OCI-LY7 (cell line): ENCODE measurements at regions of chr2 and their contacts with region 1.

Region 1: DNA sequence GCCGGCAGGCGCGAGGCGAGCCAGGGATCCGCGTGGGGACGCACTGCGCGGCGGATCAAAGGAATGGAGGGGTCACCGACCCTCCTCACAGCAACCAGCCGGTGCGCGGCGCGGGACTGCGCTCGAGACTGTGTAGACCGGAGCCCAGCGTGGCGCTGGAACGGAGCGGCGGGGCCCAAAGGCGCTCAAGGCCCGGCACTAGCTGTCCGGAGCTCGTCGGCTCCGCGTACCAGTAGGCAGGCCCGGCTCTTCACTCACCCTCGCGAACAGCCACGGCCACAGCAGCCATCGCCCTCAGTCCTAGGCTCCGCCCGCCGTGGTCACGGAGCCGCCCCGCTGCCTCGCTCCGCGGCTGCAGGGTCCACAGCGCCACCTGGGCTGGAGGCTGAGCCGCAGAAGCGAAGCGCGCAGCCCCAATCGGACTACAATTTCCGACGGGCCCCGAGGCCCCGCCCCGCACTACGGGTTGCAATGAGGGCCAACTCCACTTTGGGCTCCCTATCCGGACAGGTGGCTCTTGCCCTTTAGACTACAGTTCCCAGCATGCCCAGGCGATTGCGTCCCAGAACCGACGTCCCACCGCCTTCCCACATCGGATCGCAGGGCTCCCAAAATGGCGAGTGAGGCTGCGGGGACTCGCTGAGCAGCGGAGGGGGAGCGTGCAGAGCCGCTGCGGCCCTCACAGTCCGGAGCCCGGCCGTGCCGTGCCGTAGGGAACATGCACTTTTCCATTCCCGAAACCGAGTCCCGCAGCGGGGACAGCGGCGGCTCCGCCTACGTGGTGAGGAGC is at the starts of genes EIF2B4 and SNX17:
- DNase-seq: peak; percentile 99
- H3K4me3 ChIP-seq: peak within 1 kb of the TSS; percentile 90
- H3K27ac ChIP-seq: peak within 1 kb of the TSS; percentile 68
- H3K4me1 ChIP-seq: peaks cover 27% of the 10 kb centered on the region
- CTCF ChIP-seq: peak; percentile 81
- total RNA-seq, gene EIF2B4: 23.9 and 27.0 TPM in 2 replicates
- total RNA-seq, gene SNX17: 63.1 and 66.0 TPM in 2 replicates

Region 2: GRCh38 chr2:26911911-26912861 is 458.0 kb before region 1 on chr2:
- CTCF ChIA-PET with region 1: no interaction called
- POLR2A ChIA-PET with region 1: no interaction called
- intact Hi-C with region 1: no loop called
- DNase-seq: no peak
- H3K4me3 ChIP-seq: no peak overlapping the region
- H3K27ac ChIP-seq: no peak overlapping the region
- H3K4me1 ChIP-seq: no peaks in the 10 kb centered on the region
- CTCF ChIP-seq: no peak

Region 3: GRCh38 chr2:27271631-27272340 is 98.4 kb before region 1 on chr2:
- CTCF ChIA-PET with region 1: no interaction called
- POLR2A ChIA-PET with region 1: no interaction called
- intact Hi-C with region 1: no loop called
- DNase-seq: no peak
- H3K4me3 ChIP-seq: no peak overlapping the region
- H3K27ac ChIP-seq: no peak overlapping the region
- H3K4me1 ChIP-seq: peaks cover 39% of the 10 kb centered on the region
- CTCF ChIP-seq: no peak

Region 4: GRCh38 chr2:27322766-27323595 is 47.2 kb before region 1 on chr2 and contains the start of gene MPV17:
- CTCF ChIA-PET with region 1: interaction called, 4 read pairs
- POLR2A ChIA-PET with region 1: interaction called, 3 read pairs
- intact Hi-C with region 1: loop called (anchors 2 kb)
- DNase-seq: peak; percentile 91
- H3K4me3 ChIP-seq: peak within 1 kb of the TSS; percentile 84
- H3K27ac ChIP-seq: peak within 1 kb of the TSS; percentile 58
- H3K4me1 ChIP-seq: peaks cover 16% of the 10 kb centered on the region
- CTCF ChIP-seq: no peak
- total RNA-seq, gene MPV17: 54.1 and 63.9 TPM in 2 replicates

Region 5: DNA sequence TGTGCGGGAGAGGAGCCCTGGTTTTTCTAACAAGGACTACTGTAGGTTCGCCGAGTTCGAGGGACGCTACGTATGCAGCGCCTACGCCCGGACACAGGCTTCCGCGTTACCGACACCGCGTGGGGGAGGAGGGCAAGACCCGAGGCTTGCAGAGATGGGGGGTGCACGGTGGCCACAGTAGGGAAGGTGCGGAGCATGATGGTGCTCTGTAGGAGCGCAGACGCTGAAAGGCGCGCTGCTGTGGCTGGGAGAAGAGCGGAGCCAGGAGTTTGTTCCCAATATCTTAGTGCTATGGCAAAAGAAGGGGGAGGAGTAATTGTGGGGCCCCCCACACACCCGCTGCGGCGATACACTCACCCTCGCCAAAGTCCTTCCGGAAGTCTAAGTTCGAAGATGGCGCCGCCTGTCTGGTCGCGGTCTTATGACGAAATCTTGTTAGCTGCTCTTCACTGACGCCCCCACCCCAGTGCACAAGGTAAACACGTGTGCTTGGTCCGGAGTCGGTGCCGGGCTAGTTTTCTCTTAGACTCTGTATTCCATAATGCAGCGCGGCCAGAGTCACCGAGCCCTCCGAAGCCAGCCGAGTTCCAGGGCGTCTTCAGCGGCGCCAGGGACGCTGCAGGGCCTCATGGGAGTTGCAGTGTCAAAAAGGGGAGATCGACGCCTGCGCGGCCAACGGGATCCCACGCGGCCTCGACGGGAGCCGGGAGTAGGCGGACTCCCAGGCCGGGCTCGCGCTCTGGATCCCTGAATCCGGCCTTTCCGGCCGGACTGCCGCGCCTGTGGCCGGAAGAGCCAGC is 13.6 kb before region 1 on chr2 and contains the start of gene GTF3C2:
- CTCF ChIA-PET with region 1: no interaction called
- POLR2A ChIA-PET with region 1: interaction called, 10 read pairs
- intact Hi-C with region 1: loop called (anchors 1 kb)
- DNase-seq: peak; percentile 99
- H3K4me3 ChIP-seq: peak within 1 kb of the TSS; percentile 77
- H3K27ac ChIP-seq: peak within 1 kb of the TSS; percentile 88
- H3K4me1 ChIP-seq: peaks cover 29% of the 10 kb centered on the region
- CTCF ChIP-seq: no peak
- total RNA-seq, gene GTF3C2: 54.2 and 56.9 TPM in 2 replicates

Region 6: GRCh38 chr2:27380626-27381545 is 10.7 kb after region 1 on chr2 and contains the start of gene ZNF513:
- CTCF ChIA-PET with region 1: interaction called, 4 read pairs
- POLR2A ChIA-PET with region 1: interaction called, 18 read pairs
- intact Hi-C with region 1: no loop called
- DNase-seq: peak; percentile 93
- H3K4me3 ChIP-seq: peak within 1 kb of the TSS; percentile 86
- H3K27ac ChIP-seq: peak within 1 kb of the TSS; percentile 72
- H3K4me1 ChIP-seq: peaks cover 19% of the 10 kb centered on the region
- CTCF ChIP-seq: no peak
- total RNA-seq, gene ZNF513: 9.0 and 10.0 TPM in 2 replicates

Region 7: DNA sequence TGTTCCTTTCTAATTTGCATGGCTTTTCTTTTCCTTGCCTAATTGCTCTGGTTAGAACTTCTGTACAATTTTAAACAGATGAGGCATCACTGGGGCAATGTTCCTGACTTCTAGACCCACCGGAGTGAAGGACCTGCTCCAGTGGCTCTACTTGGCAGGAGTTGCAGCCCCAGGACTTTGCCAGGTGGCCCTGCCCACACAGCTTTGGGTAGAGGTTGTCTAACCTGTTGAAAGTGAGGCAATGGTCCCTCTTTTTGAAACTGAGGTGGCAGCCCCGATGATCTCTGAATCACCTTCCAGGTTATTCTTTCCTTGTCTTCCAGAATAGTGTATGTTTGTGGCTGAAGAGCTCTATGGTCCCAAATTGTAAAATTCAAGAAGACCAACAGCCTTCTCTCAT is 182.7 kb after region 1 on chr2:
- CTCF ChIA-PET with region 1: no interaction called
- POLR2A ChIA-PET with region 1: no interaction called
- intact Hi-C with region 1: no loop called
- DNase-seq: no peak
- H3K4me3 ChIP-seq: no peak overlapping the region
- H3K27ac ChIP-seq: no peak overlapping the region
- H3K4me1 ChIP-seq: no peaks in the 10 kb centered on the region
- CTCF ChIP-seq: no peak

Region 8: GRCh38 chr2:27628767-27629709 is 258.8 kb after region 1 on chr2 and contains the starts of genes CCDC121 and GPN1:
- CTCF ChIA-PET with region 1: no interaction called
- POLR2A ChIA-PET with region 1: no interaction called
- intact Hi-C with region 1: loop called (anchors 1 kb)
- DNase-seq: peak; percentile 92
- H3K4me3 ChIP-seq: peak within 1 kb of the TSS; percentile 96
- H3K27ac ChIP-seq: peak within 1 kb of the TSS; percentile 81
- H3K4me1 ChIP-seq: peaks cover 32% of the 10 kb centered on the region
- CTCF ChIP-seq: no peak
- total RNA-seq, gene CCDC121: 5.1 and 9.2 TPM in 2 replicates
- total RNA-seq, gene GPN1: 29.5 and 31.1 TPM in 2 replicates

Region 9: DNA sequence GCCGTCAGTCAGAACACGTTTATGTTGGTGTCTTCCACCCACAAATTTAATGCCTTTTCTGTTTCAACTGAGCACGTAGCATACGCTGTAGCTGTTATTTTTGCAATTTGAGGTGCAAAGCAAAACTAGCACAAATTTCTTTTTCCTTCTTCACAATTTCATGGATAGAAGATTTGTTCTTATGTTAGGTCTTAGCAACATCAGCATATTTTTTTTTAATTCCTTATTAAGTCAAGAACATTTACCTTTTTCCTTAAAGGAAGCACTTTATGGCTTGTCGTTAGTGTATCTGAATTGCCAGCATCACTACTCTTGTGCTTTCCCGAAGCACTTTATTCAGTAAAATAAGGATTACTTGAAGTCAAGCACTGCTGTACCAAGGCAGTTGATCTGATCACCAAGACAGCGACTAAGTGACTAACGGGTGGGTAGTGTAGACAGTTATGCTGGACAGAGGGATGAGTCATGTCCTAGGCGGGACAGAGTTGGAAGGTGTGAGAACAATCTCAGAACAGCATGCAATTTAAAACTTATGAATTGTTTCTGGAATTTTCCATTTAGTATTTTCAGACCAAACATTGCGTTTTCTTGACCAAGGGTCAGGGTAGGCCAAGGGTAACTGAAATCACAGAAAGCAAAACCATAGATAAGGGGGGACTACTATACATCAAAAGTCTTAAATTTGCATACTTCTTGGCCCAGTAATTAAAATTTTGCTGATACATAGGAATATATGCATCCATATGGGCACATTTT is 533.6 kb after region 1 on chr2:
- CTCF ChIA-PET with region 1: no interaction called
- POLR2A ChIA-PET with region 1: no interaction called
- intact Hi-C with region 1: no loop called
- DNase-seq: no peak
- H3K4me3 ChIP-seq: no peak overlapping the region
- H3K27ac ChIP-seq: no peak overlapping the region
- H3K4me1 ChIP-seq: no peaks in the 10 kb centered on the region
- CTCF ChIP-seq: no peak